ENCODE measurements at regions of chr3 and their contacts with region 1.

Region 1: DNA sequence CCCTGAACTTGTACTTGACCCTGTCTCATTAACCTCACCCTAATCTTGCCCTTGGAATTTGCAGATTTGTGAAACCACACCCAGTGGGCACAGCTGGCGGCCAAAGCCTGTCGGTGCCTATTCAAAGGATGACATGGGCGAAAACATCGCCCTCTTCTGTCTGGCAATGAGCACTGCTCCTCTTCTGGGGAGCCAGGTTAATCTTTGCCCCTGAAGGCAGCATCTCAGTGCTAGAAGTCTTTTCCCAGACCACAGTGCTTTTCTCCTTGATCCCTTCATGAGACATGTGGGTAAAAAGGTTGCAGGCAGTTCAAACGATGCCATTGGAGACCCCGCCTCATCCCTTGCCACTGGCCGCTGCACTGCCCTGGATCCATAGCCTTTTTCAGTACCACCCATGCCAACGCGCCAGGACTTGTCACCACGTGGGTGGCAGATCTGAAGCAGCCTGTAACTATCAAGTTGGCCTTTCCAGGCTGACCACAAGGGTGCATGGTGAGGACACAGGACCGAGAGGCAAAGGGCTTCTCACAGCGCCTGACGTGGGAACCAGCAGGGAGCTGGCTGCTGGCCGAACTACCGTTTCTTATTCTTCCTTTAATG is 6.5 kb upstream of the DNASE1L3 start:
- H3K4me3 Mint-ChIP-seq: peak overlapping the region; percentile 34
- H3K27ac Mint-ChIP-seq: peak overlapping the region; percentile 51
- H3K4me1 Mint-ChIP-seq: peaks cover 55% of the 10 kb centered on the region
- H3K27me3 Mint-ChIP-seq: no peaks in the 10 kb centered on the region

Region 2: DNA sequence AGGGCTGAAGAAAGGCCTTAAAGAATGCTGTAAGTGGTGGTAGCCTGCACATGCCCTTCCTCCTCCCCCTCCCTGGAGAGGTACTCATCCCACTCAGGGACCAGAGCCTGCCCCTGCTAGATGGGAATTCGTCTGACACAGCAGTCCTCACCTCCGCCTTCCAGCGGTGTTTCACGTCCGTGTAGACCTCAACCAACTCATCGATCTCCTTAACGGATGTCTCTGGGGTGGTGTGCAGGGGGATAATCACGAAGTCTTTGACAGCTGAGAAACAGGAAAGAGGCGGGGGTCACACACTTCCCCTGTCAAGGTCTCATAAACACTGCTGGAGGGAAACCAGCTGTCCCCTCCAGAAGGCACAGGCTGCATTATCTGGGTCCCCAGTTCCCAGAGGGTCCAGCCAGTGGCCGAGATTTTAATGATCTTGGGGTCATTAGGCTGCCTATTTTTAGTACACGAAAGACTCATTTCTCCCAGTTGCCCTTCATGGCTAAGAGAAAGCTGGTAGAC is 16.4 kb before region 1 on chr3:
- intact Hi-C with region 1: loop called (anchors 2 kb)
- H3K4me3 Mint-ChIP-seq: no peak overlapping the region
- H3K27ac Mint-ChIP-seq: no peak overlapping the region
- H3K4me1 Mint-ChIP-seq: peaks cover 88% of the 10 kb centered on the region
- H3K27me3 Mint-ChIP-seq: peaks cover 5% of the 10 kb centered on the region

Region 3: DNA sequence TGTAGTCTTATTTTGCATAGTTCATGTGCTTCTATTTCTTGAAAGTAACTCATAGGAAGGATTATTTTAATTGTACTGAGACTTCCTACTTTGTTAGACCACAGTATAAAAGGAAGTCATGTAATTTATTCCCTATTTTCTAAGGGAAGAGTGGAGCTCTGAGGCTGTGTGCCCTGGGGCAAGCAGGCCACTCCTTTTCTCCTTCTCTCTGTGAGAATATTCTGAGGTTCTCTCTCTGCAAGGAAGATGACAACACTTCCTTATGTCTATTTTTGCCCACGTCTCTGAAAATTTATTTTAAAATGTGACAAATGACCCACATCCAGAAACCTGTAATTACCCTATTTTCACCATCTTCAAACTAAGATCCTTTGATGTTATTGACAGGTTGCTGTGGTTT is 285.6 kb after region 1 on chr3:
- intact Hi-C with region 1: no loop called
- H3K4me3 Mint-ChIP-seq: no peak overlapping the region
- H3K27ac Mint-ChIP-seq: no peak overlapping the region
- H3K4me1 Mint-ChIP-seq: peaks cover 15% of the 10 kb centered on the region
- H3K27me3 Mint-ChIP-seq: no peaks in the 10 kb centered on the region